ENCODE measurements at regions of chr19 and their contacts with region 1.

Region 1: DNA sequence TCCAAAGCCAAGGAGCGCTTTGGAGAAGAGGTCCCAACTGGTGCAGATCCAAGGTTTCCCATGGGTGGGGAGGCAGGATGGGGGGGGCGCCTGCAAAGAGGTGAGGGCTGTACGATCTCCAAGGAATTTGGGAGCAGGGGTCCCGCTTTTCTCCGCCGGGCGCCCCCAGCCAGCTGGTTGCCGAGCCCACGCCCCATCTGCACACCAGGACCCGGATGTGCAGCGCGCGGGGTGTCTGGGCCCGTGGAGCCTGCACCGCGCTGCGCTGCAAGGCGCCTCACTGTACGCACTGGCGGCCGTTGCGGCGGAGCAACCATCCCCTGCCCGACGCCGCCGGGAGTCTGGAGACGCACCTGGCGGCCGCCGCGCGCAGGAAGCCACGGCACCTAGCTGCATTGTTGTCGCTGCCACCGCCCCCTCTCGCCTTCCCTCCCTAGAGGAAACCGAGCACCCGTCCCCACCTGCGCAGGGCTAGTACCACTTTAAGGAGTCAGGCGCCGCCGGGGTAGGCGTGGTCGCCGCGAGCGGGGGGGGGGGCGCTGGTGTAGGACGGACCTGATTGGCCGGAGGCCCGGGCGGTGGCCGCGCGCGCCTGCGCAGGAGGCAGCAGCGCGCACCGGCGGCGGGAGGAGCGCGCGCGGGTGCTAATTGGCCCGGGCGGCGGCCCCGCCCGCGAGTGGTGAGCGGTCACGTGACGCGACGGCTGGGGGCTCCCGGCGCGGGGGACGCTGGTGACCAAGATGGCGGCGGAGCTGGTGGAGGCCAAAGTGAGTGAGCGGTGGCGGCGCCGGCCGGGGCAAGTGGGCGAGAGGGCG is at the start of gene PIAS4:
- DNase-seq: peak; percentile 95 to 98 (median 96)
- ATAC-seq: peak; percentile 91 to 96 (median 95)
- H3K4me3 ChIP-seq: peak within 1 kb of the TSS; percentile 64 to 99 (median 86)
- H3K27ac ChIP-seq: peak within 1 kb of the TSS; percentile 78 to 98 (median 88)
- H3K4me1 ChIP-seq: peaks cover 3 to 47% (median 36%) of the 10 kb centered on the region in 12 donors
- H3K27me3 ChIP-seq: no peaks in the 10 kb centered on the region
- CTCF ChIP-seq: no peak
- POLR2A ChIP-seq: peak in 1 of 2 donors; percentile 61
- total RNA-seq, gene PIAS4: 12.5 to 19.1 (median 15.3) TPM

Region 2: GRCh38 chr19:4065430-4066175 is 58.4 kb after region 1 on chr19:
- intact Hi-C with region 1: loop called in 3 of 10 experiments (anchors 5 kb)
- DNase-seq: peak; percentile 98 to 99 (median 98)
- ATAC-seq: peak; percentile 80 to 91 (median 85)
- H3K4me3 ChIP-seq: peak overlapping the region in 11 of 12 donors; percentile 91 to 100 (median 97)
- H3K27ac ChIP-seq: peak overlapping the region; percentile 91 to 100 (median 99)
- H3K4me1 ChIP-seq: peaks cover 8 to 57% (median 44%) of the 10 kb centered on the region in 12 donors
- H3K27me3 ChIP-seq: no peaks in the 10 kb centered on the region
- CTCF ChIP-seq: peak in 1 of 12 donors; percentile 7
- POLR2A ChIP-seq: no peak

Region 3: DNA sequence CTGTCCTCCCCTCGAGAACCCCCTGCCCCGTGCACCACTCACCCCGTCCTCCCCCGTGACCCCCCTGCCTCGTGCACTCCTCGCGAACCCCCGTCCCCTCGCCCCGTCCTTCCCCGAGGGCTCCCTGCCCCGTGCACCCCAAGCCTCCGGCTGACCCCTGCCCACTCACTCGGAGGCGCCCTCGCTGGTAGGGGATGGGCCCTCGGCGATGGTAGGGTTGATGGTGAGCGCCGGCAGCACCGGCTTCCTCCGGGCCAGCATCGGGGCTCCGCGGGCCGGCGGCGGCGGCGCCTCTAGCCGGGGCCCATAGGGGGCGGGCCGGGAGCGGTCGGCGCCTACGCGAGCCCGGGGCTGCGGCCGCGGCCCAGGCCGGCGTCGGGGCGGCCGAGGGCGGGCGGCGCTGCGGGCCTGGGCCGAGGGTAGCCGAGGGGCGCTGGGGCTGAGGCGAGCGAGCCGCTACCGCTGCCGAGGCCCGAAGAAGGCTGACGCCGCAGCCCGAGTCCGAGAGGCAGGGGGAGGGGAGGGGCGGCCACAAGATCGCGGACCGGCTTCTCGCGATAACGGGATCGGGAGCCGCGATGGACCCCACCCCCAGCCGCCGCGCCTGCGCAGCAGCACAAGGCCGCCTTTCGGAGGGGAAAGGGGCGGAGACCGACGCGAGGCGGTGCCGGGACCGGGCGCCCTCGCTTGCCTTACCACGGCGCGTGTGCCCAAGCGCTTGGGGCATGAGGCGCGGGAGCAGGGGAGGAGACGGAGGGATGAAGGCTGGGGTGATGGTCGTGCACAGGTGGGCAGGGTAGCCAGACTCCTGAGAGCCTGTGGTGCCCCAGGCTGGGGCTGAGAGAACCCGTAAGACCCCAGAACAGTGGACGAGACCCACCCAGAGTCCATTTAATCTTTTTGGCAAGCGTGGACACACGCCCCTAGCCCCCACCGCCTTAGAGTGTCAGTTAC is 116.7 kb after region 1 on chr19 and contains the start of gene MAP2K2:
- intact Hi-C with region 1: loop called in 4 of 10 experiments (anchors 10 kb)
- DNase-seq: peak; percentile 95 to 98 (median 96)
- ATAC-seq: peak; percentile 92 to 99 (median 98)
- H3K4me3 ChIP-seq: peak within 1 kb of the TSS; percentile 44 to 95 (median 78)
- H3K27ac ChIP-seq: peak within 1 kb of the TSS in 11 of 12 donors; percentile 31 to 84 (median 72)
- H3K4me1 ChIP-seq: peaks cover 0 to 33% (median 16%) of the 10 kb centered on the region in 12 donors
- H3K27me3 ChIP-seq: no peaks in the 10 kb centered on the region
- CTCF ChIP-seq: peak in 2 of 12 donors; percentile 17 to 22
- POLR2A ChIP-seq: peak in 1 of 2 donors; percentile 86
- total RNA-seq, gene MAP2K2: 95.3 to 154 (median 108) TPM

Region 4: DNA sequence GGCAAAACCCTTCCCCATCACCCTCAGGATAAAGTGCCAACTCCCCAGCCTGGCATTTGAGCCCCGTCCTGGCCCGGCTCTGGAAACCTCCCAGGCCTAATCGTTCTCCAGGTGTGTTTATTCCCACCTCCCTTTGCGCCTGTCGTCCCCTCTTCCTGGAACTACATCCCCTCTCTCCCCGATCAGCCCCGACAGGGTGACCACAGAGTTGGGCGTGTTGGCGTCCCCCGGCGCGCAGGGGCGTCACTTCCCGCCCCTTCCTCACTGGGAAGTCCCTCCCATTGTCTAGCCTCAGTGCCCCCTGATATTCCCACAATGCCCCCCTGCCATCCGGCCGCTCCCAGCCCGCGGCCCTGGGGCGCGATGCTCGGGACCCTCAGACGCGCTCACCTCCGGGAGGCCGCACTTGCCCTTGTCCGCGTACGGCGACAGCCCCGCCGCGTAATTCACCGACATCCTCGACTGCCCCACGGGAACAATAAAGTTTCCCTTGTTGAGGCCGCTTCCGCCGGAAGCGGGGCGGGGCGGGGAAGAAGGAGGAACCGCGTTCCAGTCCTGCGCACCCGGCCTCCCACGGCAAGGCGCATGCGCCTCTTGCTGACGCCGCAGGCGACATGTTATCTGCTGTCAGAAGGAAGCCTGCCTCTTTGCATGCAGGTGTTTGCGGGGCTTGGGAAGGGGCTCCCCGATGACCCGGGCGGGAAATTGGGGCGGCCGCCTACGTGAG is 175.0 kb after region 1 on chr19 and contains the starts of genes ANKRD24 and SIRT6:
- intact Hi-C with region 1: loop called in 1 of 10 experiments (anchors 5 kb)
- DNase-seq: peak; percentile 97 to 98 (median 97)
- ATAC-seq: peak; percentile 95 to 98 (median 96)
- H3K4me3 ChIP-seq: peak within 1 kb of the TSS; percentile 70 to 98 (median 88)
- H3K27ac ChIP-seq: peak within 1 kb of the TSS; percentile 11 to 93 (median 84)
- H3K4me1 ChIP-seq: peaks cover 0 to 27% (median 15%) of the 10 kb centered on the region in 12 donors
- H3K27me3 ChIP-seq: no peaks in the 10 kb centered on the region
- CTCF ChIP-seq: no peak
- POLR2A ChIP-seq: peak in 1 of 2 donors; percentile 76
- total RNA-seq, gene ANKRD24: 0.23 to 1.4 (median 0.51) TPM in 6 of 9 donors, not detected in the others
- total RNA-seq, gene SIRT6: 10.2 to 16.7 (median 12.7) TPM